Naive thymus-derived CD4-positive, alpha-beta T cell (primary cell): ENCODE measurements at regions of chr15 and their contacts with region 1.

Region 1: DNA sequence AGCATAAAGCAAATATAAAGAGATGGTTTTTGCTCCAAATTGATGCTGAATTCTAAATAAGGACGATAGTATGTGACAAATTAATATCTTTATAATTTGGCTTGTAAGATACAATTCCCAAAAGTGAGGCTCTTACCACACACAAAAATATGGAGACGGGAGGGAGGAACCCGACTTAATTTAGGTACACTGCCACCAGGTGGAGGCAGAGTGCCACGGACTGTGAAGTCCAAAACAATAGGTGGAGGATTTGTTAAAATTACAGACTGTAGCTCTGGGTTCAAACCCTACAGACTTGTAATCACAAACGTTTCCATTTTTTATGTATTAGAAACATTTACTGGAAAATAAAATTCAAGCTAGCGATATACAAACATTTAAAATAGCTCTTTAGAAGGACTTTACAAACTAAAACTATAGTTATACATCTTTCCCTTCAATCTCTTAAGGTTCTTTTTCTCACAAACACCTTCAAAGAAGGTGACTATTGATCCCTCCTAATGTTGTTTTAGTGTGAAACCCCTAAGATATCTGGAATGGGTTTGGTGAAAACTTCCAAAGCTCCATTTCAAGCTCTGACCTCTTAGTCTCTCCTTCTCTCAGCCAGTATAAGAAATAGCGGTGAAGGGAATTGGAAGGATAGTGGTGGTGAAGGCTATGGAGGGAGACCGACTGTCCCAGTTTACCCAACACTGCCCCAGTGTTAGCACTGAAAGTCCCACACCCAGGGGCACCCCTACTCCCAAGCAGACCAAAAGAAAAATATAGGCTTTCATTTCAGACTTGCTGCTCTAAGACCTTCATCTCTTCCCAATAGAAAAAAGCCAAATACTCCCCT is 89.7 kb downstream of the AQP9 start:
- DNase-seq: peak; percentile 41 to 69 (median 61)
- ATAC-seq: peak; percentile 71
- H3K4me3 ChIP-seq: no peak overlapping the region
- H3K4me3 Mint-ChIP-seq: peak overlapping the region in 1 of 10 donors; percentile 40
- H3K27ac ChIP-seq: no peak overlapping the region
- H3K27ac Mint-ChIP-seq: no peak overlapping the region
- H3K4me1 ChIP-seq: no peaks in the 10 kb centered on the region
- H3K4me1 Mint-ChIP-seq: peaks cover 5 to 20% (median 17%) of the 10 kb centered on the region in 7 donors
- H3K27me3 ChIP-seq: no peaks in the 10 kb centered on the region
- H3K27me3 Mint-ChIP-seq: peaks cover 0 to 20% (median 9%) of the 10 kb centered on the region in 5 donors

Region 2: GRCh38 chr15:58749532-58750337 is 521.8 kb after region 1 on chr15 and contains the start of gene ADAM10:
- CTCF ChIA-PET with region 1: interaction called, 4 read pairs
- POLR2A ChIA-PET with region 1: no interaction called
- intact Hi-C with region 1: loop called in 1 of 2 experiments (anchors 5 kb)
- DNase-seq: peak; percentile 84 to 98 (median 93)
- ATAC-seq: peak; percentile 96
- H3K4me3 ChIP-seq: peak within 1 kb of the TSS; percentile 66
- H3K4me3 Mint-ChIP-seq: peak within 1 kb of the TSS; percentile 89 to 99 (median 98)
- H3K27ac ChIP-seq: peak within 1 kb of the TSS; percentile 86
- H3K27ac Mint-ChIP-seq: peak within 1 kb of the TSS; percentile 85 to 96 (median 94)
- H3K4me1 ChIP-seq: peaks cover 17% of the 10 kb centered on the region in 2 donors
- H3K4me1 Mint-ChIP-seq: peaks cover 24 to 45% (median 42%) of the 10 kb centered on the region in 7 donors
- H3K27me3 ChIP-seq: no peaks in the 10 kb centered on the region
- H3K27me3 Mint-ChIP-seq: no peaks in the 10 kb centered on the region
- total RNA-seq, gene ADAM10: 119 to 170 (median 142) TPM

Region 3: DNA sequence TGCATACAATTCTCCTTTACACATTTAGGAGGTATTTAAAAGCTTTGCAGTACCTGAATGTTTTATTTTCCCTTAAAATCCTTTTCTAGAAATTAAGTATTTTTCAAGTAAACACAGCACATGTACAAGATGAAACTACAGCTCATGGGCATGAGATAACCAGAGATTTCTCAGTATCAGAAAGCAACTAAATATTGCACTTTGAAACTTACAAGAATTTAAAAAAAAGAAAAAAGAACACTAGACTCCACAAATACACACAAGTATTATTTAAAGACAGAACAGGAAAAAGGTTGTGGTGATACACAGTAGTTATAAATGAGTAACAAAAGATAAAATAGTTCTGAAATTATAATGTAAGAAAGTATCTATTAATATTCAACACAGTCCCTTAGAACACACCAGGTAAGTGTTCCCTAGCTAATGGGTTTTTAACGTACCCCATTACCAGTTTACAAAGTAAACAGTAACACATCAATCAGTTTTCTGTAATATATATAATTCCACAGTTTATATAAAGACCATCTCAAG is 670.3 kb after region 1 on chr15:
- CTCF ChIA-PET with region 1: no interaction called
- POLR2A ChIA-PET with region 1: no interaction called
- intact Hi-C with region 1: loop called (anchors 10 kb)
- DNase-seq: no peak
- ATAC-seq: no peak
- H3K4me3 ChIP-seq: no peak overlapping the region
- H3K4me3 Mint-ChIP-seq: no peak overlapping the region
- H3K27ac ChIP-seq: no peak overlapping the region
- H3K27ac Mint-ChIP-seq: peak overlapping the region in 3 of 9 donors; percentile 20 to 59 (median 27)
- H3K4me1 ChIP-seq: no peaks in the 10 kb centered on the region
- H3K4me1 Mint-ChIP-seq: peaks cover 4 to 26% (median 16%) of the 10 kb centered on the region in 7 donors
- H3K27me3 ChIP-seq: no peaks in the 10 kb centered on the region
- H3K27me3 Mint-ChIP-seq: no peaks in the 10 kb centered on the region

Region 4: DNA sequence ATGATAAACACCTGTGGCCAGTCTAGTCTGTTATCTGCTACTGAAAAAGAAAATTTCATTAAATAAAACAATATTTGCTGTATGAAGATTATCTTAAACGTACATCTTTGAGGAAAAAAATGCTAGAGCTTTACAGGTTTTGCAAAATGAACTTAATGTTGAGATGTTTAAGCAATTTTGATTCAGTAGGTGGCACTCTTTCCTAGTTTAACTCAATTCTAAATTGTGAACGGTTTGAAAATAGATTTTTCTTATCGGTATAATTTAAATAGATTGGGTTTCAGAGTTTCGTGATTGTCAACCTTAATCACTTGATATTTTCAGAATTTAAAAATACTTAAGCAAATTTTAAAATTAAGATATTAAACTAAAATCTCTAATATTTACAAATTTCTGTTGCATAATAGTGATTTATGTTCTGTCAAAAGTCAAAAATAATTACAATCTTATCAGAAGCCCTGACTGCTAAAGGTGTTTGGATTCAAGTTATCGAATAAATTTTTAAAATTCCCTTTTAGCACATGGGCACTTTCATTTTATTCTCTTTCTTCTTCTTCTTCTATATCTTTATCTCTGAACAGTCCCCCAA is 752.5 kb after region 1 on chr15:
- CTCF ChIA-PET with region 1: no interaction called
- POLR2A ChIA-PET with region 1: no interaction called
- intact Hi-C with region 1: loop called in 1 of 2 experiments (anchors 1 kb)
- DNase-seq: peak in 6 of 9 donors; percentile 30 to 57 (median 48)
- ATAC-seq: peak; percentile 62
- H3K4me3 ChIP-seq: no peak overlapping the region
- H3K4me3 Mint-ChIP-seq: peak overlapping the region in 3 of 10 donors; percentile 55 to 74 (median 60)
- H3K27ac ChIP-seq: no peak overlapping the region
- H3K27ac Mint-ChIP-seq: peak overlapping the region in 1 of 9 donors; percentile 85
- H3K4me1 ChIP-seq: peaks cover 19 to 20% of the 10 kb centered on the region in 2 donors
- H3K4me1 Mint-ChIP-seq: peaks cover 21 to 37% (median 27%) of the 10 kb centered on the region in 7 donors
- H3K27me3 ChIP-seq: no peaks in the 10 kb centered on the region
- H3K27me3 Mint-ChIP-seq: peaks cover 0 to 18% (median 0%) of the 10 kb centered on the region in 5 donors

Region 5: GRCh38 chr15:59492389-59493377 is 1264.8 kb after region 1 on chr15:
- CTCF ChIA-PET with region 1: interaction called, 5 read pairs
- POLR2A ChIA-PET with region 1: no interaction called
- intact Hi-C with region 1: loop called (anchors 1 kb)
- DNase-seq: peak; percentile 12 to 63 (median 49)
- ATAC-seq: peak; percentile 85
- H3K4me3 ChIP-seq: no peak overlapping the region
- H3K4me3 Mint-ChIP-seq: peak overlapping the region in 1 of 10 donors; percentile 26
- H3K27ac ChIP-seq: no peak overlapping the region
- H3K27ac Mint-ChIP-seq: peak overlapping the region in 1 of 9 donors; percentile 2
- H3K4me1 ChIP-seq: no peaks in the 10 kb centered on the region
- H3K4me1 Mint-ChIP-seq: peaks cover 0 to 5% (median 4%) of the 10 kb centered on the region in 7 donors
- H3K27me3 ChIP-seq: no peaks in the 10 kb centered on the region
- H3K27me3 Mint-ChIP-seq: peaks cover 0 to 28% (median 3%) of the 10 kb centered on the region in 5 donors